Activated T-helper 1 cell treated with anti-CD3 and anti-CD28 coated beads, Interleukin-12 subunit alpha, Interleukin-12 subunit beta, Interleukin-2, Interleukin-4 antibody, amounts not matched to agents 30 ng/mL and 10 ng/mL and 1 ng/mL, durations not matched to agents 14 hours and 24 hours and 36 hours (primary cell): ENCODE measurements at regions of chr4 and their contacts with region 1.

Region 1: DNA sequence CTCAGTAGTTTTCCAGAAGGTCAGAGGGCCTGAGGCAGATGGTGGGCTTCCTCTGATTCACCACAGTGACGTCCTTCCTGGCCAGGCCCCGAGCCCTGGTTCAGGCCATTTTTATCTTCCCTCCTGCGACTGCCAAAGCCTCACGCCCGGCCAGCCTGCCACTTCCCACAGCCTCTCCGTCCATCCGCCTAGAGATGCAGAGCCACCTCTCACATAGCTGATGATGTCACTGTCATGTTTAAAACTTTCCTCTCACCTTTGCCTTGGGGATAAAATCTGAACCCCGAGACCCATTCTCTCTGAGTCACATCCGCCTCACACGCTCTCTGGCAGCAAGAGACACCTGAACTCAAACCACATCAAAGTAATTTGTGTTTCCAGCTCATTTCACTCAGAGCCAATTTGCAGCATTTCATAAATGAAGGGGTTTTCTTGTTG is 175.3 kb downstream of the QDPR start:
- DNase-seq: peak; percentile 77
- H3K4me3 Mint-ChIP-seq: peak overlapping the region; percentile 47
- H3K27ac Mint-ChIP-seq: peak overlapping the region; percentile 87
- H3K4me1 Mint-ChIP-seq: peaks cover 43% of the 10 kb centered on the region
- H3K27me3 Mint-ChIP-seq: peaks cover 6% of the 10 kb centered on the region

Region 2: GRCh38 chr4:16225863-16226815 is 1110.4 kb before region 1 on chr4 and contains the start of gene TAPT1:
- intact Hi-C with region 1: loop called (anchors 10 kb)
- DNase-seq: peak; percentile 78
- H3K4me3 Mint-ChIP-seq: peak within 1 kb of the TSS; percentile 97
- H3K27ac Mint-ChIP-seq: peak within 1 kb of the TSS; percentile 96
- H3K4me1 Mint-ChIP-seq: peaks cover 60% of the 10 kb centered on the region
- H3K27me3 Mint-ChIP-seq: no peaks in the 10 kb centered on the region
- total RNA-seq, gene TAPT1: 26.0 and 31.8 TPM in 2 replicates

Region 3: DNA sequence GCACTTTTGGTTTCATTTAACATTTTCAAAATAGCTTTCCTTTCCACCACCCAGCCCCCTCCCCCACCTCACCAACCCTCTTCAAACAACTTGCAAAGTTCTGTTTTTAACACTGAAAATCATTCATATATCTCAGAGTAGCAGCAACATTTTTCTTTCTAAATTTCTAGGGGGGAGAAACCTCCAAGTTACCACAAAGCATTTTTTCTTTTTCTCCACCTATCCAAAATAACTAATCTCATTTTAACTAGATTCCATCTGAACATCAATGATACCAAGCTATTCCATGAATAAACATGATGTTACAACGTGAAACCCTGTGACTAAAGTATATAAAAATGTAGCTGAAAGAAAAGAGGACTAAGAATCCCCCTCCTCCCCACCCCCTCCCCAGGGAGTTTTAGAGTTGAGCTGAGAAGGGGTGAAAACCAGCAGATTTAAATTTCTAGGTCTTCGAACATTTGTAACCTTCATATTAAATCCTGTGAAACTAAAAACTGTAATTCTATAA is 443.3 kb before region 1 on chr4:
- intact Hi-C with region 1: loop called (anchors 2 kb)
- DNase-seq: no peak
- H3K4me3 Mint-ChIP-seq: no peak overlapping the region
- H3K27ac Mint-ChIP-seq: no peak overlapping the region
- H3K4me1 Mint-ChIP-seq: peaks cover 37% of the 10 kb centered on the region
- H3K27me3 Mint-ChIP-seq: peaks cover 19% of the 10 kb centered on the region

Region 4: DNA sequence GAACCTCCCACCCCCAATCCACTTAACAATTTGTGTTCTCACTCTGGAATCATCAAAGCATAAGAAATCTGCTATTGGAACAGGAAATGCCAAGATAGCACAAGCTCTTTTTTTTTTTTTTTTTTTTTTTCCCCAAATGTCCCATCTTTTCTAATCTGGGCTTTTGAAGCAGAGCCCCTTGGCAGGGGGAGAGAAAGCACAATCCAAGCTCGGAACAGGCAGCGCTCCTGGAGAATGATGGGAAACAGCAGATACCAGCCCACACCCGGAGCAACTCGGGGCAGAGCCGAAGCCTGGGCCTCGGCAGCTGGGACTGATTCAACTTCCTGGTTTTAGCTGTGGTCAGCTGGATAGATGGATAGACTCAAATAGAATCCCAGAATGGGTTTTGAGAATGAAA is 59.8 kb before region 1 on chr4:
- intact Hi-C with region 1: no loop called
- DNase-seq: no peak
- H3K4me3 Mint-ChIP-seq: no peak overlapping the region
- H3K27ac Mint-ChIP-seq: no peak overlapping the region
- H3K4me1 Mint-ChIP-seq: no peaks in the 10 kb centered on the region
- H3K27me3 Mint-ChIP-seq: peaks cover 4% of the 10 kb centered on the region

Region 5: DNA sequence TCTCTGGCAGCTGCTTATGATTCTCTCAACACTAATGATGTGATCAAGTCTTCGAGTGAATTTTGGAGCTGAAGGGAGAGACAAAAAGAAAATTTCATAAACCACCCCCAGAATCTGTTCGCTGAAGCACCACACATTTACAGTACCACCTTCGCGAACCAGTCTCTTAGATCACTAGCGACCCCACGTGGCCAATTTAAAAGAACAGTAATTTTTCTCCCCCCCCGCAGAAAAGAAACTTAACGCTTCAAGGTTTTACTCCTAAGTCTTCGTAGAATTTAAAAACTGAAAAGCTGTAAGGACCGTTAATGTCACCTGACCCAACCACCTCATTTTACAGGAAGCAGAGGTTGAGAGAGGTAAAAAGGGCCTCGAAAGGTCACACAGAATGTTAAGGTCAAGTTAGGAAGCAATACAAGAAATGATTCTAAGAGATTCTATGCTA is 12.1 kb before region 1 on chr4:
- intact Hi-C with region 1: loop called (anchors 1 kb)
- DNase-seq: peak; percentile 21
- H3K4me3 Mint-ChIP-seq: peak overlapping the region; percentile 61
- H3K27ac Mint-ChIP-seq: no peak overlapping the region
- H3K4me1 Mint-ChIP-seq: peaks cover 10% of the 10 kb centered on the region
- H3K27me3 Mint-ChIP-seq: peaks cover 8% of the 10 kb centered on the region

Region 6: GRCh38 chr4:17511950-17512795 is 175.6 kb after region 1 on chr4 and contains the start of gene QDPR:
- intact Hi-C with region 1: loop called (anchors 5 kb)
- DNase-seq: peak; percentile 69
- H3K4me3 Mint-ChIP-seq: peak within 1 kb of the TSS; percentile 98
- H3K27ac Mint-ChIP-seq: peak within 1 kb of the TSS; percentile 92
- H3K4me1 Mint-ChIP-seq: peaks cover 15% of the 10 kb centered on the region
- H3K27me3 Mint-ChIP-seq: peaks cover 19% of the 10 kb centered on the region
- total RNA-seq, gene QDPR: 28.7 and 29.7 TPM in 2 replicates

Region 7: GRCh38 chr4:17576932-17577665 is 240.6 kb after region 1 on chr4 and contains the start of gene LAP3:
- intact Hi-C with region 1: loop called (anchors 1 kb)
- DNase-seq: peak; percentile 98
- H3K4me3 Mint-ChIP-seq: peak within 1 kb of the TSS; percentile 93
- H3K27ac Mint-ChIP-seq: peak within 1 kb of the TSS; percentile 94
- H3K4me1 Mint-ChIP-seq: peaks cover 38% of the 10 kb centered on the region
- H3K27me3 Mint-ChIP-seq: no peaks in the 10 kb centered on the region
- total RNA-seq, gene LAP3: 108 and 109 TPM in 2 replicates

Region 8: GRCh38 chr4:18057821-18058533 is 721.4 kb after region 1 on chr4:
- intact Hi-C with region 1: loop called (anchors 2 kb)
- DNase-seq: no peak
- H3K4me3 Mint-ChIP-seq: peak overlapping the region; percentile 2
- H3K27ac Mint-ChIP-seq: no peak overlapping the region
- H3K4me1 Mint-ChIP-seq: peaks cover 19% of the 10 kb centered on the region
- H3K27me3 Mint-ChIP-seq: peaks cover 38% of the 10 kb centered on the region